Left colon (tissue), 2 donors: ENCODE measurements at regions of chr7 and their contacts with region 1.

Region 1: DNA sequence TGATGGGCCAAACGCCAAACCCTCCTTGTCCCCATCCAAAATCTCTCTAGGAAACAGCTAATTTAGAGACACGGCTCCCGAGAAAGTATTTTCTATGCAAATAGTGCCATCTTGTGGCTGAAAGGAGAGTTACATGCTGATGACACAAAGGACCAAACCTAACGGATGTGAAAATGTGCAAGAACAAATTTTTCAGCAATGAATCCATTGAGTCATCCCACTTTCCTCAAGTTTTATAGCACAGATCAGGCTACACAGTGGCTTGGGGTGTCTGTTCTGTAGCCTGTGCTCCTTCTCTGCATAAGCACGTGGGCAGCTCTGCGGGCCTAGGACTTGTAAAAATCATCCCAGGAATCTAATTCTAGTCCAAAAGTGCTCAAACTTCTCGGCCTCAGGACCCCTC is 154.8 kb upstream of the PRR15 start:
- DNase-seq: peak in 1 of 2 donors; percentile 41
- ATAC-seq: peak; percentile 53

Region 2: GRCh38 chr7:29189743-29190201 is 219.1 kb before region 1 on chr7:
- intact Hi-C with region 1: loop called in 1 of 2 experiments (anchors 5 kb)
- DNase-seq: peak; percentile 63 to 81
- ATAC-seq: peak; percentile 65